ENCODE measurements at regions of chr22 and their contacts with region 1.

Region 1: DNA sequence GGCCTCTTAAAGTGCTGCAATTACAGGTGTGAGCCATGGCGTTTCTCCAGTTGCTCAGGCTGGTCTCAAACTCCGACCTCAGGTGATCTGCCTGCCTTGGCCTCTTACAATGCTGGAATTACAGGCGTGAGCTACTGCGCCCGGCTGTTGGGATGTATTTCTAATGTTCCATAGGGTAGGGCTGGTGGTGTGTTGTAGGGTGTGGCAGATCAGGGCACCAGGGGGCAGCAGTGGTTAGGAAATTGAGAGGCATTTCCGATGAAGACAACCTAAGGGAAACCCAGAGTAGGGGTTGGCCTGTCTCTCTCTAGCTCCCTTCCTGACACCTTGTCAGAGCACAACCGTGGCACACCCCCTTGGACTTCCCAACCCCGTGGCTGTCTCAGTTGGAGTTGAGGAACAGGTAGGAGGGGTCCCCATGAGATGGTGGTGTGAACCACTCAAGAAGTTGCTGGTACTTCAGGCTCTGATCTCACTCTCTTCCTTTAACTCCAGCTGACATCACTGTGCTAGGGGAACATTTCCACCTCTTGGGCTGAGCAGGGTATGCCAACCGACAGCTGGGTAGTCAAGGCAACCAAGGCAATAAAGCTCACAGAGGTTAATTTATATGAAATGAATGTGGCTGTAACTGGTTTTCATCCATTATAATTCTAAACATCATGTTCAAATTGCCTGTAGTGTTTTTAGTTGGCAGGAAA is 33.0 kb downstream of the YWHAH start:
- DNase-seq: peak; percentile 74
- ATAC-seq: peak; percentile 75 to 92 (median 86)
- H3K4me3 ChIP-seq: no peak overlapping the region
- H3K27ac ChIP-seq: no peak overlapping the region
- H3K4me1 ChIP-seq: peaks cover 0 to 6% (median 0%) of the 10 kb centered on the region in 9 donors
- H3K27me3 ChIP-seq: no peaks in the 10 kb centered on the region
- CTCF ChIP-seq: peak; percentile 42 to 72 (median 69)

Region 2: GRCh38 chr22:31749636-31750364 is 227.5 kb before region 1 on chr22 and contains the start of gene PRR14L:
- intact Hi-C with region 1: no loop called
- DNase-seq: peak; percentile 99
- ATAC-seq: peak; percentile 91 to 95 (median 92)
- H3K4me3 ChIP-seq: peak within 1 kb of the TSS; percentile 68 to 98 (median 90)
- H3K27ac ChIP-seq: peak within 1 kb of the TSS; percentile 32 to 98 (median 90)
- H3K4me1 ChIP-seq: peaks cover 9 to 63% (median 45%) of the 10 kb centered on the region in 9 donors
- H3K27me3 ChIP-seq: no peaks in the 10 kb centered on the region
- CTCF ChIP-seq: peak in 4 of 9 donors; percentile 10 to 38 (median 28)
- total RNA-seq, gene PRR14L: 10.9 to 19.6 (median 17.3) TPM

Region 3: DNA sequence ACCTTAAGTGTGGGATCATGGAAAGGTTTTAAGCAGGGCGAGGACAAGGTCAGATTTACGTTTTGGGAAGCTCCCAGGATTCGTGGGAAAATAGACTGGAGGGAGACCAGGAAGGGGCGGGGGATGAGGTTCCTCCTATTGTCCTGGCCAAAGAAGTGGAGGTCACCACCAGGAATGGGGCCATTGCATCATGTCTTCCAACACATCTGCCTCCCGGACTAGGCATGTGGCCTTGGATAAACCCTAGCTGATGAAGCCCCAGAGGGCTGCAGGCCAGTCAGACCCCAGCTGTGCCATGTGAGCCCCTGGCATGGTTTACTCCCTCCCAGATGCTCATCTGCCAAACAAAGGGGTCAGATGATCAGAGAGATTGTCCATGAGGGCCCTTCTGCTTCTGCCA is 44.4 kb before region 1 on chr22:
- intact Hi-C with region 1: no loop called
- DNase-seq: peak in 1 of 2 donors; percentile 27
- ATAC-seq: peak in 5 of 8 donors; percentile 16 to 73 (median 58)
- H3K4me3 ChIP-seq: no peak overlapping the region
- H3K27ac ChIP-seq: peak overlapping the region in 2 of 10 donors; percentile 25 to 29
- H3K4me1 ChIP-seq: peaks cover 0 to 27% (median 6%) of the 10 kb centered on the region in 9 donors
- H3K27me3 ChIP-seq: no peaks in the 10 kb centered on the region
- CTCF ChIP-seq: no peak

Region 4: GRCh38 chr22:32080904-32081303 is 103.6 kb after region 1 on chr22:
- intact Hi-C with region 1: loop called (anchors 2 to 5 kb)
- DNase-seq: no peak
- ATAC-seq: peak in 7 of 8 donors; percentile 42 to 78 (median 58)
- H3K4me3 ChIP-seq: no peak overlapping the region
- H3K27ac ChIP-seq: no peak overlapping the region
- H3K4me1 ChIP-seq: peaks cover 0 to 40% (median 36%) of the 10 kb centered on the region in 9 donors
- H3K27me3 ChIP-seq: no peaks in the 10 kb centered on the region
- CTCF ChIP-seq: peak in 8 of 9 donors; percentile 27 to 68 (median 64)